ENCODE measurements at regions of chr13 and their contacts with region 1.

Region 1: GRCh38 chr13:59898066-59898465 is 265.7 kb downstream of the DIAPH3 start:
- DNase-seq: no peak
- H3K4me3 ChIP-seq: no peak overlapping the region
- H3K27ac ChIP-seq: no peak overlapping the region
- H3K4me1 ChIP-seq: peaks cover 15% of the 10 kb centered on the region
- H3K27me3 ChIP-seq: no peaks in the 10 kb centered on the region
- CTCF ChIP-seq: no peak

Region 2: DNA sequence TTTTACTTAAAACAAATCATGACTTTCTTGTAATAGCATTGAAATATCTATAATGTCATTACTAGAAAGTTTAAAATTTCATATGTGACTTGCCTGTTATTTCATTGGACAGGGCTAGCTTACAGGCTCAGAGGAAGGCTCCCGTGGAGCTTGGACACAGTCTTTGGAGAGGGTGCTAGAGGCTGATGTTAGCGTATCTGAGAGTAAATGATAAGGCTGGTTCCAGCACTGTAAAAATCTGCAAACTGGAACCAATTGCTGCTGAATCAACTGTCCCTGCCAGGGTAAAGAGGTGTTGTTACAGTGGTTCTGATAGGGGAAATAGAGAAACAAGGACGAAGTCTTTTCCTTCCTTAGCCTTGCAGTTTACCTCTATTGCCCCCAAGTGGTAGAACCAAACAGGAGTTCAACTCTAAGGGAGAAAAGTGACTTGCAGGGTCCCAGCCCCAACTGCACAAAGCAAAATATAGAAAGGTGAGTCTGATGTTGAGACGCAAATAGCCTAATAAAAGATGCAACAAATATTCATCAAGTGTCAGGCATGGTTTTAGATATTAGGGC is 636.1 kb before region 1 on chr13:
- CTCF ChIA-PET with region 1: no interaction called
- POLR2A ChIA-PET with region 1: interaction called, 13 read pairs
- intact Hi-C with region 1: no loop called
- DNase-seq: peak; percentile 58
- H3K4me3 ChIP-seq: no peak overlapping the region
- H3K27ac ChIP-seq: no peak overlapping the region
- H3K4me1 ChIP-seq: peaks cover 10% of the 10 kb centered on the region
- H3K27me3 ChIP-seq: no peaks in the 10 kb centered on the region
- CTCF ChIP-seq: peak; percentile 72

Region 3: GRCh38 chr13:61002686-61003085 is 1104.6 kb after region 1 on chr13:
- CTCF ChIA-PET with region 1: no interaction called
- POLR2A ChIA-PET with region 1: no interaction called
- intact Hi-C with region 1: no loop called
- DNase-seq: no peak
- H3K4me3 ChIP-seq: no peak overlapping the region
- H3K27ac ChIP-seq: no peak overlapping the region
- H3K4me1 ChIP-seq: no peaks in the 10 kb centered on the region
- H3K27me3 ChIP-seq: no peaks in the 10 kb centered on the region
- CTCF ChIP-seq: no peak

Measured in A673 (cell line).